Activated CD4-positive, alpha-beta T cell treated with anti-CD3 and anti-CD28 coated beads for 36 hours (primary cell): ENCODE measurements at regions of chr16 and their contacts with region 1.

Region 1: GRCh38 chr16:5885521-5885920 is 787.9 kb upstream of the EEF2KMT start:
- DNase-seq: no peak
- ATAC-seq: no peak
- H3K4me3 Mint-ChIP-seq: no peak overlapping the region
- H3K27ac Mint-ChIP-seq: no peak overlapping the region
- H3K4me1 Mint-ChIP-seq: no peaks in the 10 kb centered on the region
- H3K27me3 Mint-ChIP-seq: no peaks in the 10 kb centered on the region

Region 2: GRCh38 chr16:5874899-5875298 is 10.6 kb before region 1 on chr16:
- CTCF ChIA-PET with region 1: no interaction called
- POLR2A ChIA-PET with region 1: interaction called, 11 read pairs
- intact Hi-C with region 1: no loop called
- DNase-seq: no peak
- ATAC-seq: no peak
- H3K4me3 Mint-ChIP-seq: no peak overlapping the region
- H3K27ac Mint-ChIP-seq: no peak overlapping the region
- H3K4me1 Mint-ChIP-seq: no peaks in the 10 kb centered on the region
- H3K27me3 Mint-ChIP-seq: peaks cover 4% of the 10 kb centered on the region